RWPE1 (cell line): ENCODE measurements at regions of chr19 and their contacts with region 1.

Region 1: GRCh38 chr19:6862673-6863078 is 24.7 kb upstream of the ADGRE1 start:
- DNase-seq: peak; percentile 62
- H3K27ac ChIP-seq: peak overlapping the region; percentile 60
- CTCF ChIP-seq: peak; percentile 76

Region 2: GRCh38 chr19:6476155-6476895 is 386.4 kb before region 1 on chr19:
- CTCF ChIA-PET with region 1: no interaction called
- POLR2A ChIA-PET with region 1: no interaction called
- DNase-seq: peak; percentile 88
- H3K27ac ChIP-seq: no peak overlapping the region
- CTCF ChIP-seq: no peak

Region 3: DNA sequence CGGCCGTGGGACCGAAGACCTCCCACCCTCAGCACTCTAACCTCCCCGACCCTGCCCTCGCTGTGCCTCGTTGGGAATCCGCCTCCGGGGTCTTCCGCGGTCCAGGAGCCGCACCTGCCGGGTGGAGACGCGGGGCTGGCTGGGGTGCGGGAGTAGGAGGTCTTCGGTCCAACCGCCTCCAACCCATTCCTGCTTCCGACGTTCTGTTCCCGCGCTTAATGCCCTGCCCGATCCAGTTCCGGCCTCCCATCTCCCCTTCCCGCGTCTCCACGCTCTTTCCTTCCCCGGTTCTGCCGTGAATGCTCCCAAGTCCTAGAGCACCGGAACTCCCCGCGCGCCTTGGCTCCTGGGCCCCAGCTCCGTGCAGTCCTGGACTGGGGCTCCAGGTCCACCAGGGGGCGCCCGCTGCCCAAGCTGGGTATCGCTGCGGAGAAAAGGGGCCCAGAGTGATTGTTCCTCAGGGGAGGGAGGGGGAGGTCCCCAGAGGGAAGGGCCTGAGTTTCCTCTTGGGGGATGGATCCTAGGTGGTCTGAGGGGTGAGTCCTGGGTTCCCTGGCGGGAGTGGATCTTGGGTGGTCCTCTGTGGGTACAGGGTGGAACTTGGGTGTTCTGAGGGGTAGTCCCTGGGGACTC is 345.9 kb before region 1 on chr19:
- CTCF ChIA-PET with region 1: interaction called, 14 read pairs
- POLR2A ChIA-PET with region 1: no interaction called
- DNase-seq: peak; percentile 86
- H3K27ac ChIP-seq: peak overlapping the region; percentile 80
- CTCF ChIP-seq: peak; percentile 97

Region 4: DNA sequence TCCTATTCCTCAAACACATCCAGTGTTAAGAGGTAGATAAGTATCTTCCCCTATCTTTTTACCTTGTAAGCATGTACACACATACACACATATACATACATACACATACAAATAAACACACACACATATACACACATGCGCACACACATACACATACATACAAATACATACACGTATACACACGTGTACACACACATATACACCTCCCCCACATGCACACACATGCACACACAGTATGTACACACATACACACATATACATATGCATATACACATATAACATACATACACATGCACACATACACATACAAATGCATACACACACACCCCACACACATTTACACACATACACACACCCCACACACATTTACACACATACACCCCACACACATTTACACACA is 48.8 kb after region 1 on chr19:
- CTCF ChIA-PET with region 1: no interaction called
- POLR2A ChIA-PET with region 1: no interaction called
- DNase-seq: no peak
- H3K27ac ChIP-seq: no peak overlapping the region
- CTCF ChIP-seq: no peak